ENCODE measurements at regions of chr7 and their contacts with region 1.

Region 1: GRCh38 chr7:91465595-91466061 is 201.4 kb downstream of the FZD1 start:
- ATAC-seq: no peak
- H3K4me3 ChIP-seq: no peak overlapping the region
- H3K27ac ChIP-seq: no peak overlapping the region
- H3K4me1 ChIP-seq: peaks cover 0 to 12% of the 10 kb centered on the region in 2 donors

Region 2: GRCh38 chr7:91299952-91300775 is 165.5 kb before region 1 on chr7:
- in situ Hi-C with region 1: no loop called
- ATAC-seq: no peak
- H3K4me3 ChIP-seq: no peak overlapping the region
- H3K27ac ChIP-seq: no peak overlapping the region
- H3K4me1 ChIP-seq: peaks cover 3 to 4% of the 10 kb centered on the region in 2 donors

Region 3: GRCh38 chr7:91351374-91351773 is 114.3 kb before region 1 on chr7:
- in situ Hi-C with region 1: loop called in 1 of 9 experiments (anchors 25 kb)
- ATAC-seq: peak in 3 of 8 experiments; percentile 24 to 51 (median 34)
- H3K4me3 ChIP-seq: no peak overlapping the region
- H3K27ac ChIP-seq: no peak overlapping the region
- H3K4me1 ChIP-seq: peaks cover 0 to 13% of the 10 kb centered on the region in 2 donors

Measured in motor neuron (in vitro differentiated cells).